Endothelial cell of umbilical vein (primary cell): ENCODE measurements at regions of chr4 and their contacts with region 1.

Region 1: DNA sequence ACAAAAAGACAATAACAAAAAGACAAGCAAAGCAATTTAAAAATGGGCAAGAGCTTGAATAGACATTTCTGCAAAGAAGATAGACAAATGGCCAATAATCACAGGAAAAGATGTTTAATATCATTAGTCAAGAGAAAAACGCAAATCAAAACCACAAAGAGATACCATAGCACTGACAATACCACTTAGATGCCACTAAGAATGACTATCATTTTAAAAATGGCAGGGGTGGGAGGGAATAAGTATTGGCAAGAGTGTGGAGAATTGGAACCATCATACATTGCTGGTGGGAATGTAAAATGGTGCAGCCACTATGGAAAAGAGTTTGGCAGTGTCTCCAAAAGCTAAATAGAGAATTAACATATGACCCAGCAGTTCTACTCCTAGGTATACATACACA is 15.1 kb upstream of the EXOC1 start:
- DNase-seq: no peak
- H3K4me3 ChIP-seq: no peak overlapping the region
- H3K27ac ChIP-seq: no peak overlapping the region
- H3K4me1 ChIP-seq: no peaks in the 10 kb centered on the region
- H3K27me3 ChIP-seq: peaks cover 0 to 23% of the 10 kb centered on the region in 2 experiments
- CTCF ChIP-seq: no peak
- POLR2A ChIP-seq: no peak

Region 2: DNA sequence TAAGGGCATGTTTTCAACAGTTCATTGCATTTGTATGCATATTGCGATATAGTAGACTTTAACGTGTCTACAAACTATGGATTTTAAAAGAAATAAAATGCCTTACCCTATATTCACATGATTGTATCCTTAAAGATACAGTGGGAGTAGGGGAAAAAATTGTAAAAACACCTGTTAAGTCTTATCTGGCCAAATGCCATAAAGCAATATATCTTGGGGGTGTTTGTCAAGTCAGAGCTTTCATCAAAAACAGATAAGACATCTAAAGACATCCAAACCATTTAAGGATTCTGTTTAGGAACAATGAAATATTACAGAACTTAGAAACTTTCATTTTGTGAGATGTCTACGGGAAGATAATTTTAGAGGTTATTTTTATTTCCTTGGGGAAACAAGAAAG is 396.7 kb after region 1 on chr4:
- CTCF ChIA-PET with region 1: no interaction called
- POLR2A ChIA-PET with region 1: no interaction called
- dilution Hi-C with region 1: no loop called
- intact Hi-C with region 1: loop called (anchors 5 kb)
- DNase-seq: no peak
- H3K4me3 ChIP-seq: no peak overlapping the region
- H3K27ac ChIP-seq: no peak overlapping the region
- H3K4me1 ChIP-seq: no peaks in the 10 kb centered on the region
- H3K27me3 ChIP-seq: peaks cover 0 to 6% of the 10 kb centered on the region in 2 experiments
- CTCF ChIP-seq: no peak
- POLR2A ChIP-seq: no peak